Activated T-helper 1 cell treated with anti-CD3 and anti-CD28 coated beads, Interleukin-12 subunit alpha, Interleukin-12 subunit beta, Interleukin-2, Interleukin-4 antibody, amounts not matched to agents 30 ng/mL and 10 ng/mL and 1 ng/mL, durations not matched to agents 14 hours and 24 hours and 36 hours (primary cell): ENCODE measurements at regions of chr14 and their contacts with region 1.

Region 1: DNA sequence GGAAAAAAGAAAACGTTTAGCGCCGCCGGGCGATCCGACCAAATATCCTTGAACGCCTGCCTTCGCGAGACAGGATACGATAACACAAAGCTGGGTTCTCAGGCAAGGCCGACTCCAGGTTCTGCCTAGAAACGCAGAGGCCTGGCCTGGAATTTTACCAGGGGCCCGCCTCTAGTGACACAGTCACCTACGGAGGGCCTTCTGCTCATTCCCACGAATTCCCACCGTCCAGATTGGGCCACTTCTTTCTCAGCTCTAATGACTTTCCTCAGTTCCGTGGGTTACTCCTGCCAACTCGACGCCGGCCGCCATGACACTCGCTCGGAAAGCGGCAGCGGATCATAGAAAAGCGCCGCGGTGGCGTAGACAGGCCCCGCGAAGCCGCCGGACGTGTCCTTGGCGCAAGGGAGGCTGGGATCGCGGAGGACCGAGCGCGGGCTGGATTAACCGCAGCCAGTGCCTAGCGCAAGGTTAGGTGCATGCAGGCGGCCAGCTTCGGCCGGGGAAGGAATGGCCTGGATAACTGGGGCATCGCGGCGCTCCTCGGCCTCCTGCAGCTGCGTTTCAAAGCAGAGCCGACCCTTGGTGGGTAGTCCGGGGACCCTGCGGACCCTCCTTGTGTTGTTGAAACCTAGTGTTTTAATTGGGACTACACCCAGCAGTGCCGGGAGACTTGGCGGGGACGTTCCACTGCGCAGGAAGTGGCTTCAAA is at the start of gene TRIP11:
- DNase-seq: peak; percentile 94
- H3K4me3 Mint-ChIP-seq: peak within 1 kb of the TSS; percentile 93
- H3K27ac Mint-ChIP-seq: peak within 1 kb of the TSS; percentile 98
- H3K4me1 Mint-ChIP-seq: peaks cover 38% of the 10 kb centered on the region
- H3K27me3 Mint-ChIP-seq: no peaks in the 10 kb centered on the region
- total RNA-seq, gene TRIP11: 36.5 and 44.4 TPM in 2 replicates

Region 2: GRCh38 chr14:92121670-92122350 is 81.9 kb after region 1 on chr14 and contains the starts of genes CPSF2 and NDUFB1:
- intact Hi-C with region 1: loop called (anchors 5 kb)
- DNase-seq: peak; percentile 80
- H3K4me3 Mint-ChIP-seq: peak within 1 kb of the TSS; percentile 97
- H3K27ac Mint-ChIP-seq: peak within 1 kb of the TSS; percentile 100
- H3K4me1 Mint-ChIP-seq: peaks cover 29% of the 10 kb centered on the region
- H3K27me3 Mint-ChIP-seq: no peaks in the 10 kb centered on the region
- total RNA-seq, gene CPSF2: 103 and 104 TPM in 2 replicates
- total RNA-seq, gene NDUFB1: 73.3 and 83.5 TPM in 2 replicates

Region 3: DNA sequence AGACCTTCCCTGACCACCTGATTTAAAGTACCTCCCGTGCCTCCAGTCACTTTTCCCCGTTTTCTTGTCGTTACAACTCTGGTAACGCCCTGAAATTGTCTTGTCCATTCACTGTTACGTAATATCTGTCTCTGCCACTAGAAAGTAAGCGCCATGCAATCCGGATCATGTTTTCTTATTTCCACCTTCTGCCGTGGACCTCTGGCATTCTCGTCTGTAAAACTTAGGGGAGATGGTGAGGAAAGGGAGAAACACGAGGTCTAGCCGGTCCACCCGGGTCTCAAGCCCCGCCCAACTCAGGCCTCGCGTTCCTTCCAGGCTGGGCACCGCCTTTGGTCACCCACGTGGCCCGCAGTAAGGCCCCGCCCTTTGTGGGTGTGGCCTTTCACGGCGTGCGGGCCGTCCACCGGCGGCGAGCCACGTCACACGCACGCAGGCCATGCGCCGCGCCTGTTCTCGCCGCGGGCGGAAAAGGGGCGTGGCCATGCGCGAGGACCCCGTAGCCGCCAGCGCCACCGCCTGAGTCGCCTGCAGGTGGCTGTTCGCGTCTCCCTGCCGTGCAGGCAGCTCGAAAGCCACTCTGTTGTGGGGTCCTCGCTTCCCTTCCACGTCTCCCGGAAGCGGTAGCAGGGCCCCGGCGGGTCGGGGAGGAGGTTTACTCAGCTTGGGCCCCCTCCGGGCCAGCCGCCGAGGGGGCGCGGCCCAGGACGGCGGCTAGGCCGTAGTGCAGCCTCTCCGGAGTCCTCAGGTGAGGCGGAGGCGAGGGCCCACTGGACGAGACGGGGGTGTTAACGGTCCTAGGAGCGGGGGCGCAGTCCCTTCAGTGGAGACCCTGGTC is 754.1 kb after region 1 on chr14 and contains the start of gene GOLGA5:
- intact Hi-C with region 1: loop called (anchors 1 kb)
- DNase-seq: peak; percentile 98
- H3K4me3 Mint-ChIP-seq: peak within 1 kb of the TSS; percentile 99
- H3K27ac Mint-ChIP-seq: peak within 1 kb of the TSS; percentile 98
- H3K4me1 Mint-ChIP-seq: peaks cover 30% of the 10 kb centered on the region
- H3K27me3 Mint-ChIP-seq: no peaks in the 10 kb centered on the region
- total RNA-seq, gene GOLGA5: 22.2 and 22.6 TPM in 2 replicates